AG04449 (cell line): ENCODE measurements at regions of chr1 and their contacts with region 1.

Region 1: DNA sequence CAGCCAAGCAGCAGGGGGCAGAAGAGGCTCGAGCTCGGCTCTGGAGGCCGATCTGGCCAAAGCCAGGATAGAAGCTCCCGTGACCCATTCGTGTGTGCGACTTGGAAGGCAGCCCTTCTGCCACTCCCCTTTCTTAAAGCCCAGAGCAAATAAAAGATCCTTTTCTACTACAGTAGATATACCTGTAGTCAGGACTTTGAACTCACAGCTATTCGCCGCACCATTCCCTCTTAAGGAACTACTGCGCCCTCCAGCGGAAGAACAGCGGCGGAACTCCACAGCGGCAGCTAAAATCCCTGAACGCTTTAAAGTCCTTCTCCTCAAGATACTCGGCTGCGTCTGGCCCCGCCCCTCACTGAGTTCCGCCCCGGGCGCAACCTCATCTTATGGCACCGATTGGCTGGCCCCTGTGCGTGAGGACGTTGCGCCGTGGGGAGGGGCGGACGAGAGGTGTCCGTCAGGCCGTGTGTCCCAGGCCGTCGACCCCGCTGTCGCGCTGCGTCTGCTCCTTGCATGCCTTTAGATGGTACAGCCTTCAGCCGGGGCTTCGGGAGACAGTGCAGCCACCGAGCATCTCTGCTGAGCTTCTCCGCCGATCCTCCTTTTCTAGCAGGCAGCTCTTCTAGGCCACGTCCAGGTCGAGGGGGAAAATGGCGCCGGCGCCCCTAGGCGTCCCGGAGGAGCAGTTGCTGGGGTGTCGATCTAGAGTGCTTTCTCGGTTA is at the start of gene LRIG2:
- DNase-seq: peak; percentile 92
- H3K4me3 ChIP-seq: peak within 1 kb of the TSS; percentile 99
- CTCF ChIP-seq: peak; percentile 91

Region 2: GRCh38 chr1:112706908-112707663 is 365.8 kb before region 1 on chr1 and contains the start of gene RHOC:
- CTCF ChIA-PET with region 1: interaction called, 11 read pairs
- POLR2A ChIA-PET with region 1: no interaction called
- DNase-seq: peak; percentile 34
- H3K4me3 ChIP-seq: peak within 1 kb of the TSS; percentile 88
- CTCF ChIP-seq: peak; percentile 98

Region 3: DNA sequence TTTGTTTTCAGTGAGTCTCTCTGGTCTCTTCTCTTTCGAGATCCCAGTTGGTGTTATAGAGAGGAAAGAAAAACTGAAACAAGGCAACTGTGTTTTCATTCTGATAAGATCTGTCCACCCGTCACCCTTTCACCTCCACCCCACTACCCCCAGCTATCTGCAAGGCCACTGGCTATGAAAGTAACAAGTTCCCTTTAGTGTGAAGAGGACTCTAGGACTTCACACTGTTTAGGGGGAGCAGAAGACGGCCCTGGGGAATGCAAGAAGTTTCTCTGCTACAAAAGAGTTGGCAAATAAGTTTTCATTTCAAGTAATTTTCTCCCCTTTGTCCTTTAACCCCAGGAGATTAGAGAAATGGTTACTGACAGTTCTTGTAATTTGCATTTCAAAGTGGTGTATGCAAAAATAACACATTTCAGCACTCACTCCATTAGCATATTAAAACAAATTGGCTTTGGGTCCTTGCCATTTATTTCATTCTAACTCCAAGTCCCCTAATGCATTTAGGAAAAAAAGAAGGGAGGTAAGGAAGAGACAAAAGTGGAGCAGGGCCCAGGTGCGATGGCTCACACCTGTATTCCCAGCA is 278.2 kb before region 1 on chr1:
- CTCF ChIA-PET with region 1: interaction called, 10 read pairs
- POLR2A ChIA-PET with region 1: no interaction called
- DNase-seq: no peak
- H3K4me3 ChIP-seq: no peak overlapping the region
- CTCF ChIP-seq: no peak

Region 4: GRCh38 chr1:112818990-112819689 is 253.8 kb before region 1 on chr1:
- CTCF ChIA-PET with region 1: interaction called, 21 read pairs
- POLR2A ChIA-PET with region 1: no interaction called
- DNase-seq: no peak
- H3K4me3 ChIP-seq: no peak overlapping the region
- CTCF ChIP-seq: no peak

Region 5: GRCh38 chr1:112888416-112889029 is 184.4 kb before region 1 on chr1:
- CTCF ChIA-PET with region 1: interaction called, 81 read pairs
- POLR2A ChIA-PET with region 1: no interaction called
- DNase-seq: no peak
- H3K4me3 ChIP-seq: no peak overlapping the region
- CTCF ChIP-seq: no peak

Region 6: DNA sequence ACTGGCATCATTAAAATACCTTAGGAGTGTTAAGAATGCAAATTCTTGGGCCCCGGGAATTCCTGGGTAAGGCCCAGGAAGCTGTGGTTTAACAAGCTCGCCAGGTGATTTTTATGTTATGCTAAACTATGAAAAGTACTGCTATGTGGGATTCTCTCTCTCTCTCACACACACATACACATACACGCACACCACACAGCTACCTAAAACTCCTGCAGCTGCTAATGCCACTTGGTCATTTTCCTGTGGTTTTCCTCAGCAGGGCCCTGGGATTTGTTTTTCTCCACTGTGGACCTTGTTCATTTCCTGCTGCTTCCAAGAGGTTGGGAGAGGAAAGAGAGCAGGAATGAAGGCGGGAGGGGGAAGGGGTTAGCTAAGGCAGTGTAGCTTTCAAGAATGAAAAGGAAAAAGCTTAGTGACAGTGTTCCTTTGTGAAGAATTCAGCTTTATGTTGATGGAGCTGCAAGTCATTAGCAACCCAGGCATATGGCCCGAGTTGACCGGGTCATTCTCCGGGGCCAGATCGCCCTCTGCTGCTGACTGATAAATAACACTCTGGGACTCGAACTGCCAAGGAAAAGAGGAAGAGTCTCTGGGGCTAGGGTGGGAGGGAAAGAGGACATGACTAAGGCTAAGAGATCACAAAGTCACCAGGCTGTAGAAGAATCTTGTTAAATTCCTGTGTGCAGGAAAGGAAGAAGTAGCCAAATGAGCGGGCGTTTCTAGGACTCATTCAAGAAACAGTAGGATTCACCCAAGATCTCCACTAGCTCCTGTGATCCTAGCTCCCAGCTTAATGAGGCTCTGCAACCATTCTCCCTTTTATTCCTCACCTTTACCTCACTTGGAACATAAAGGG is 30.4 kb before region 1 on chr1:
- CTCF ChIA-PET with region 1: interaction called, 51 read pairs
- POLR2A ChIA-PET with region 1: interaction called, 3 read pairs
- DNase-seq: peak; percentile 69
- H3K4me3 ChIP-seq: no peak overlapping the region; the same call in 1 of the 2 replicates
- CTCF ChIP-seq: peak; percentile 57

Region 7: GRCh38 chr1:113088972-113089371 is 16.1 kb after region 1 on chr1:
- CTCF ChIA-PET with region 1: interaction called, 63 read pairs
- POLR2A ChIA-PET with region 1: interaction called, 3 read pairs
- DNase-seq: no peak
- H3K4me3 ChIP-seq: no peak overlapping the region
- CTCF ChIP-seq: no peak

Region 8: DNA sequence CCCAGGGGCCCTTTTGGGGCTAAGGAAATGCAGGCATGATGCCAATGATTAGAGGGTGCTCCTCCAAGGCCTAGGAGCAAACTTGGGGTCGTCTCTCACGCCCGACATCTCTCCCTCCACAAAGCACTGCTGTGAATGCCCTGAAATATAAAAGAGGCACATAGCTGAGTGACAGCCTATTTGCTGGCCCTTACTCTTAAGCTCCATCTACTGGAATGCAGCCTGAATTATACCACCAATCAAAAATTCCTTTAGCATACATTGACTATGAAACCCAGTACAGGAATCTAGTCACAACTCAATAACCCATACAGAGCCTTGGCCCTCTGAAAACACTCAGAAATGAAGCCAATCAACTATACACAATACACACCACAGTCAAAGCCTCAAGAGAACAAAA is 105.6 kb after region 1 on chr1:
- CTCF ChIA-PET with region 1: no interaction called
- POLR2A ChIA-PET with region 1: no interaction called
- DNase-seq: no peak
- H3K4me3 ChIP-seq: no peak overlapping the region
- CTCF ChIP-seq: peak; percentile 8

Region 9: GRCh38 chr1:113325039-113325438 is 252.1 kb after region 1 on chr1:
- CTCF ChIA-PET with region 1: no interaction called
- POLR2A ChIA-PET with region 1: no interaction called
- DNase-seq: no peak
- H3K4me3 ChIP-seq: no peak overlapping the region
- CTCF ChIP-seq: no peak

Region 10: DNA sequence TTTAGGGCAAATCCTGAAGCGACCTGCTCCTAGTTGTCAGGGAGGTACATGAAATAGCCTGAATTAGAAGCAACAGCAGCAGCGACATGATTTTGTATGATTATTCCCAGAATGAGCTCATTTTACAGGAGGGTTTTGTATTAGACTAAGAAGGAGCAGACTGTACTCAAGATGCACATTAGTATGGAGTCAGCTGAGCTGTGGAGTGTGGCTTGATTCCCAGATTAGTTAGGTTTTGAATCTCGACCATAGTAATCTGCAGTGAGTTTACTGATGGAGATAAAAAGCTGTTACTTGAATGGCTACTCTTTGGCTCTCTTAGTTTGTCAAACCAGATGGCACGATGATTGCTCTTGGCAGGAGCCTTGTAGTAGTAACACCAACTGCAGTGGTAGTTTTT is 543.2 kb after region 1 on chr1:
- CTCF ChIA-PET with region 1: no interaction called
- POLR2A ChIA-PET with region 1: no interaction called
- DNase-seq: no peak
- H3K4me3 ChIP-seq: no peak overlapping the region
- CTCF ChIP-seq: no peak